Esophagus squamous epithelium (tissue), 5 donors: ENCODE measurements at regions of chr11 and their contacts with region 1.

Region 1: GRCh38 chr11:8813658-8814057 is 97.3 kb upstream of the AKIP1 start:
- DNase-seq: no peak
- H3K4me3 ChIP-seq: no peak overlapping the region
- H3K27ac ChIP-seq: peak overlapping the region; percentile 57 to 95 (median 81)
- H3K4me1 ChIP-seq: peaks cover 30 to 64% (median 40%) of the 10 kb centered on the region in 3 donors
- H3K27me3 ChIP-seq: no peaks in the 10 kb centered on the region
- CTCF ChIP-seq: peak; percentile 69 to 87 (median 78)
- POLR2A ChIP-seq: no peak

Region 2: GRCh38 chr11:8699903-8700302 is 113.8 kb before region 1 on chr11:
- intact Hi-C with region 1: loop called (anchors 10 kb)
- DNase-seq: no peak
- H3K4me3 ChIP-seq: no peak overlapping the region
- H3K27ac ChIP-seq: peak overlapping the region; percentile 51 to 94 (median 58)
- H3K4me1 ChIP-seq: peaks cover 0 to 18% (median 0%) of the 10 kb centered on the region in 3 donors
- H3K27me3 ChIP-seq: no peaks in the 10 kb centered on the region
- CTCF ChIP-seq: no peak
- POLR2A ChIP-seq: no peak

Region 3: GRCh38 chr11:9039194-9039593 is 225.5 kb after region 1 on chr11:
- intact Hi-C with region 1: no loop called
- DNase-seq: no peak
- H3K4me3 ChIP-seq: no peak overlapping the region
- H3K27ac ChIP-seq: no peak overlapping the region
- H3K4me1 ChIP-seq: no peaks in the 10 kb centered on the region
- H3K27me3 ChIP-seq: no peaks in the 10 kb centered on the region
- CTCF ChIP-seq: no peak
- POLR2A ChIP-seq: no peak

Region 4: DNA sequence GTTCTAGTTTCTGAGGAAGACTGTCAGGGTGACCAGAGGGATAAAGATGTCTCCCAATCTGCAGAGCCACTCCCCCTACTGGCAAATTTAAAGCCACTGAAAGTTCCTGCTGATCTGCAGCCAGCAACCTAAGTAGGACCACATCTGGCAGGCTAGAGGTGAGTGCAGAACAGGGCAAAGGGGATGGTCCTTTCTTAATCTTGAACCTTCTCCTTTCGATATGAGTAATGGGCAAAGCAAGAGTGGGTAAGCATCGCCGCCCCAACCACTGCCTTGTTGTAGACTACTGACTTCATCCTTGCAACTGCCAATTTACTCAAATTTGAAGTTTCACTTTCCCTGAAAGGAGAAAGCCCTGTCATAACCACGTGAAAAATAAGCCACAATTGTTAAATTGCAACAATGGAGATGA is 247.0 kb after region 1 on chr11:
- intact Hi-C with region 1: no loop called
- DNase-seq: no peak
- H3K4me3 ChIP-seq: no peak overlapping the region
- H3K27ac ChIP-seq: no peak overlapping the region
- H3K4me1 ChIP-seq: peaks cover 0 to 8% (median 0%) of the 10 kb centered on the region in 3 donors
- H3K27me3 ChIP-seq: no peaks in the 10 kb centered on the region
- CTCF ChIP-seq: no peak
- POLR2A ChIP-seq: no peak

Region 5: GRCh38 chr11:9219572-9219971 is 405.9 kb after region 1 on chr11:
- intact Hi-C with region 1: no loop called
- DNase-seq: no peak
- H3K4me3 ChIP-seq: no peak overlapping the region
- H3K27ac ChIP-seq: peak overlapping the region in 2 of 4 donors; percentile 13 to 39
- H3K4me1 ChIP-seq: peaks cover 0 to 30% (median 6%) of the 10 kb centered on the region in 3 donors
- H3K27me3 ChIP-seq: no peaks in the 10 kb centered on the region
- CTCF ChIP-seq: no peak
- POLR2A ChIP-seq: no peak